Heart right ventricle (tissue), 16 donors: ENCODE measurements at regions of chr2 and their contacts with region 1.

Region 1: DNA sequence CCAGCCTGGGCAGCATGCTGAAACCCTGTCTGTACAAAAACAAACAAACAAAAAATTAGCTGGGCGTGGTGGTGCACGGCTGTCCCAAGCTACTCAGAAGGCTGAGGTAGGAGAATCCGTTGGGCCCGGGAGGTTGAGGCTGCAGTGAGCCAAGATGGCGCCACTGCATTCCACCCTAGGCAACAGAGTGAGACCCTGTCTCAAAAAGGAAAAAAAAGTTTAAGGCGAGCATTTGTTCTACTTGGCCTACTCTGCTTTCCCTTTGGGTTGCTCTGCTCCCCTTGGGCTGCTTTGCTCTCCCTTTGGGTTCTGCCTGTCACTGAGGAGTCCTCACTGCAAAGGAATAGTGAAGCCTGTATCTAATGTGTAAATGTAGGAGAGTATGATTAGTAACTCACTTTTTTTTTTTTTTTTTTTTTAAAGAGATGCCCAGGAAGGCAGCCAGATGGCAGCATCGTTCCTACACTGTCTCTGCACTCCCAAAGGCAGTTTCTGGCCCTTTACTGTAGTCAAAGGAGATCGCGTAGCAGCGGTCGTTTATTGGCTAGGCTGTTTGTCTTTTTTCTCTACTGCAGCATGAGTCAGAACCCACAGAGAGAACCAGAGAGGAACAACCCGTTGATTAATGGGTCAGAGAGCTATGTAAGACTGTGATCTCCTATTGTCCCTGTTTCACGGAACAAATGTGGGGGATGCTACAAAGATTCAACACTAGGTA is 118.3 kb upstream of the CWC22 start:
- DNase-seq: peak; percentile 18 to 35
- ATAC-seq: peak; percentile 76 to 97 (median 89)
- H3K4me3 ChIP-seq: no peak overlapping the region
- H3K27ac ChIP-seq: no peak overlapping the region
- H3K4me1 ChIP-seq: peaks cover 0 to 10% (median 0%) of the 10 kb centered on the region in 9 donors
- H3K27me3 ChIP-seq: peaks cover 0 to 12% (median 0%) of the 10 kb centered on the region in 7 donors
- CTCF ChIP-seq: peak in 8 of 9 donors; percentile 42 to 64 (median 58)

Region 2: GRCh38 chr2:181058378-181059269 is 933.2 kb after region 1 on chr2:
- intact Hi-C with region 1: loop called in 7 of 10 experiments (anchors 5 to 10 kb)
- DNase-seq: no peak
- ATAC-seq: no peak
- H3K4me3 ChIP-seq: no peak overlapping the region
- H3K27ac ChIP-seq: no peak overlapping the region
- H3K4me1 ChIP-seq: peaks cover 0 to 7% (median 0%) of the 10 kb centered on the region in 9 donors
- H3K27me3 ChIP-seq: no peaks in the 10 kb centered on the region
- CTCF ChIP-seq: peak; percentile 34 to 77 (median 65)

Region 3: GRCh38 chr2:181063696-181064095 is 938.3 kb after region 1 on chr2:
- intact Hi-C with region 1: loop called in 7 of 10 experiments (anchors 5 to 10 kb)
- DNase-seq: no peak
- ATAC-seq: no peak
- H3K4me3 ChIP-seq: no peak overlapping the region
- H3K27ac ChIP-seq: no peak overlapping the region
- H3K4me1 ChIP-seq: no peaks in the 10 kb centered on the region
- H3K27me3 ChIP-seq: no peaks in the 10 kb centered on the region
- CTCF ChIP-seq: no peak

Region 4: GRCh38 chr2:181466661-181467576 is 1341.5 kb after region 1 on chr2:
- intact Hi-C with region 1: loop called in 3 of 10 experiments (anchors 5 to 10 kb)
- DNase-seq: peak; percentile 43 to 66
- ATAC-seq: no peak
- H3K4me3 ChIP-seq: no peak overlapping the region
- H3K27ac ChIP-seq: no peak overlapping the region
- H3K4me1 ChIP-seq: peaks cover 0 to 67% (median 0%) of the 10 kb centered on the region in 9 donors
- H3K27me3 ChIP-seq: no peaks in the 10 kb centered on the region
- CTCF ChIP-seq: peak; percentile 37 to 88 (median 77)

Region 5: GRCh38 chr2:181697571-181697970 is 1572.2 kb after region 1 on chr2:
- intact Hi-C with region 1: loop called in 1 of 10 experiments (anchors 10 kb)
- DNase-seq: no peak
- ATAC-seq: peak in 2 of 8 donors; percentile 29 to 48
- H3K4me3 ChIP-seq: no peak overlapping the region
- H3K27ac ChIP-seq: no peak overlapping the region
- H3K4me1 ChIP-seq: peaks cover 0 to 7% (median 0%) of the 10 kb centered on the region in 9 donors
- H3K27me3 ChIP-seq: peaks cover 0 to 19% (median 0%) of the 10 kb centered on the region in 7 donors
- CTCF ChIP-seq: no peak

Region 6: DNA sequence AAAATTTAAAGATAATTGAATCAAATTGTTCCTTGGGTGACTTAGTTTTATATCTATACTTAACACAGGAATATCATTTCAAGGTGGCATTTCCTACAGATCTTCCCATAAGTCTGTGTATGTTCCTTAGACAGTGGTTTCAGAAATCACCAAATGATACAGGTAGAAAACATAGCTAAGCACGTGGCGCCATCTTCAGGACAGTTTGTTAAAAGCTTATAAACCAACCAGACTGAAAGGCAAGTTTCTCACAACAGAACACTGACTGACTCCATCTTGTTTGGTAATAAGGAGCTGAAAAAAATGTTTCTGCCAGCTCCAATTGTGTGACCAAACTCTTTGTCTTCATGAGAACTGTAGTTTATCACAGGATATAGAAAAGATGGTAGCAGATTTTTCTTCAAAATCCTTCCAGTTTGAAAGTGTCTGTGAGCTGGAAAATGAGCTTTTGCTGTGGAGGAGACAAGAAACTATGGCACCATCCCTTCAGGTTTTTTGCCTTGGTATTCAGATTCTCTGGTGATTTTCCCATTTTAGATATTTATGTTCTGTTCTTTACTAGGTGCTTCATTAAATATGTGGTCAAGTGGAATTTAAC is 1589.7 kb after region 1 on chr2:
- intact Hi-C with region 1: loop called in 7 of 10 experiments (anchors 2 to 10 kb)
- DNase-seq: peak in 1 of 2 donors; percentile 65
- ATAC-seq: peak in 4 of 8 donors; percentile 59 to 68 (median 66)
- H3K4me3 ChIP-seq: no peak overlapping the region
- H3K27ac ChIP-seq: no peak overlapping the region
- H3K4me1 ChIP-seq: no peaks in the 10 kb centered on the region
- H3K27me3 ChIP-seq: peaks cover 0 to 9% (median 0%) of the 10 kb centered on the region in 7 donors
- CTCF ChIP-seq: peak; percentile 26 to 76 (median 70)